Activated naive CD8-positive, alpha-beta T cell treated with anti-CD3 and anti-CD28 coated beads, Interleukin-2, amount 10 ng/mL, durations not matched to agents 7 days and 5 days (primary cell): ENCODE measurements at regions of chr3 and their contacts with region 1.

Region 1: GRCh38 chr3:169812332-169813235 is at the starts of genes LRRC34 and LRRIQ4:
- DNase-seq: peak; percentile 81
- ATAC-seq: peak; percentile 70
- H3K4me3 Mint-ChIP-seq: peak within 1 kb of the TSS; percentile 86
- H3K27ac Mint-ChIP-seq: peak within 1 kb of the TSS; percentile 91
- H3K4me1 Mint-ChIP-seq: peaks cover 28% of the 10 kb centered on the region
- H3K27me3 Mint-ChIP-seq: peaks cover 6% of the 10 kb centered on the region
- total RNA-seq, gene LRRC34: 6.9 to 8.1 TPM
- total RNA-seq, gene LRRIQ4: 0.22 to 0.23 TPM

Region 2: GRCh38 chr3:169764452-169765274 is 47.9 kb before region 1 on chr3 and contains the start of gene TERC:
- POLR2A ChIA-PET with region 1: interaction called, 26 read pairs
- DNase-seq: peak; percentile 89
- ATAC-seq: peak; percentile 86
- H3K4me3 Mint-ChIP-seq: peak within 1 kb of the TSS; percentile 96
- H3K27ac Mint-ChIP-seq: peak within 1 kb of the TSS; percentile 98
- H3K4me1 Mint-ChIP-seq: peaks cover 22% of the 10 kb centered on the region
- H3K27me3 Mint-ChIP-seq: no peaks in the 10 kb centered on the region
- total RNA-seq, gene TERC: 7.3 to 10.9 TPM

Region 3: GRCh38 chr3:169772897-169773828 is 39.4 kb before region 1 on chr3 and contains the start of gene MYNN:
- POLR2A ChIA-PET with region 1: interaction called, 50 read pairs
- DNase-seq: peak; percentile 93
- ATAC-seq: peak; percentile 79
- H3K4me3 Mint-ChIP-seq: peak within 1 kb of the TSS; percentile 99
- H3K27ac Mint-ChIP-seq: peak within 1 kb of the TSS; percentile 100
- H3K4me1 Mint-ChIP-seq: peaks cover 31% of the 10 kb centered on the region
- H3K27me3 Mint-ChIP-seq: no peaks in the 10 kb centered on the region
- total RNA-seq, gene MYNN: 17.9 to 19.1 TPM

Region 4: GRCh38 chr3:169780742-169781141 is 31.8 kb before region 1 on chr3:
- POLR2A ChIA-PET with region 1: interaction called, 18 read pairs
- DNase-seq: no peak
- ATAC-seq: peak; percentile 80
- H3K4me3 Mint-ChIP-seq: peak overlapping the region; percentile 76
- H3K27ac Mint-ChIP-seq: peak overlapping the region; percentile 78
- H3K4me1 Mint-ChIP-seq: peaks cover 42% of the 10 kb centered on the region
- H3K27me3 Mint-ChIP-seq: no peaks in the 10 kb centered on the region

Region 5: DNA sequence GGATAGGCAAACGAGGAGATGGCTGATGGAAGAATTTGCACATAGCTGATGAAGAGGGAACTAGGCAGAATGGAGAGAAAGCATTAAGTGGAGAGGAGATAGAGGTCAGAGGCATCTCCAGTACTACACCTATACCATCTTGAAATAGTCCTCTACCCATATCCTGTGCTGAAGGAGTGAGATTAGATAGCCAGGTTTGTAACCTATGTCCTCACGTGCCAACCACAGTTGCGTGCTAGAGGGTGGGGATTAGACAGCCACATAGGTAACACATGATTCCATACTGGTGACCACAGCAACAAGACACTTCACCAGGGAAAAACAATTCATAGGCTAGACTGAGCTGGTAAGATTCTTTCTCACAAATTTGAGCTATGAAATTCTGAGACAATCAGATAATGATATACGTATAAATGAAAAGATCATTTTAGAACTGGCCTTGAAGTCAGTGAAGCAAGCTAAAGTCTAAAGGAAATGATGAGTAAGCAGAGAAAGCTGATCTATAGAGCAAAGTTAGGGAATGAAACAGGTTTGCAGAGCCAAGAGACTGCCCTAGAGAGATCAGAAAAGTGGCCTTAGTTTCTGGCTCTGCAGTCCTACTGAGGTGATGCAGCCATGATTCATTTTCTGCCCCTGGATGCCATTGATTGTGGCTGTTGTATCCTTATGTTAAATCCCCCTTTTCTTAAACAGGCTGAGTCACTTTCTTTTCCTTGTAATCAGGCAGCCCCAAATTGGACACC is 21.7 kb before region 1 on chr3:
- POLR2A ChIA-PET with region 1: no interaction called
- DNase-seq: no peak
- ATAC-seq: no peak
- H3K4me3 Mint-ChIP-seq: no peak overlapping the region
- H3K27ac Mint-ChIP-seq: no peak overlapping the region
- H3K4me1 Mint-ChIP-seq: peaks cover 7% of the 10 kb centered on the region
- H3K27me3 Mint-ChIP-seq: no peaks in the 10 kb centered on the region

Region 6: DNA sequence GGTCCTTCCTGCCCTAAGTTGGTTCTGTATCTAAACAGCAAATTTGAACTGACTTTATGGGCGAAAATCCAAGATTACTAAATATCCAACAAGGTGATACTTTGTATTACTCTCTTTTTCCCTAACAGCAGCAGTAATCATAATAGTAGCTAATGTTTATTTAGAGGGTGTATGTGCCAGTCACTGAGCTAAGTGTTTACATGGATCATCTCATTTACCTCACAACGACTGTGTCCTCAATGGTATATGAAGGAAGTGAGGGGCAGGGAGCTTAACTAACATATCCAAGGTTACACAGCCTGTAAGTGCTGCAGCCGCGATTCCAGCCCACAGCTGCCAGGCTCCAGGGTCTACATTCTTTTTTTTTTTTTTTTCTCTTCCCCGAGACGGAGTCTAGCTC is 10.4 kb after region 1 on chr3:
- POLR2A ChIA-PET with region 1: no interaction called
- DNase-seq: no peak
- ATAC-seq: no peak
- H3K4me3 Mint-ChIP-seq: no peak overlapping the region
- H3K27ac Mint-ChIP-seq: no peak overlapping the region
- H3K4me1 Mint-ChIP-seq: no peaks in the 10 kb centered on the region
- H3K27me3 Mint-ChIP-seq: peaks cover 12% of the 10 kb centered on the region

Region 7: DNA sequence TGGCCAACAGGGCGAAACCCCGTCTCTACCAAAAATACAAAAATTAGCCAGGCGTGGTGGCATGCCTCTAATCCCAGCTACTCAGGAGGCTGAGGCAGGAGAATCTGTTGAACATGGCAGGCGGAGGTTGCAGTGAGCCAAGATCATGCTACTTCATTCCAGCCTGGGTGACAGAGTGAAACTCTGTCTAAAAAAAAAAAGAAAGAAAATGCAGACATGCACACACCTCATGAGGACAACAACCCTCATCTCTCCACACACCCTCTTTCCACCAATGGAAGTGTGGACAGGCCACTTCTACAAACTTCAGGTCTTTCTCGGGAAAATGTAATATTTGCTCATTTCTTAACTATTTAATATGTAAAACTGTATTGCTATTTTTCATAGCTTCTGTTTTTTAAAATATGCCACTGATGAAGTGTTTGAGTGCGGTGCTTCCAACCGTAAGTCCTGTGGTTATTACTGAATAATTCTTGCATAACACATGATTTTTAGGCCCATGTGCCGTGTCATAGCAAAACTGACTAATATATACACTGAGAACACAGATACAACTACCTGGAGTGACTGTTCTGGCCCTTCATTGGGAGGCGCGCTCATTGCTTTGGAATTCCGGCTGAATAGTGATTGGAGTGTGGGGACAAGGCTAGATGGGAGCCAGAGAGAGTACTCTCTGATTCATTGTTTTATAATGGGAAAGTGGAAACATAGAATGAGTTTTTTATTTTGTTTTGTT is 34.0 kb after region 1 on chr3:
- POLR2A ChIA-PET with region 1: no interaction called
- DNase-seq: no peak
- ATAC-seq: no peak
- H3K4me3 Mint-ChIP-seq: no peak overlapping the region
- H3K27ac Mint-ChIP-seq: no peak overlapping the region
- H3K4me1 Mint-ChIP-seq: no peaks in the 10 kb centered on the region
- H3K27me3 Mint-ChIP-seq: peaks cover 36% of the 10 kb centered on the region